Activated CD8-positive, alpha-beta memory T cell treated with anti-CD3 and anti-CD28 coated beads, Interleukin-2, amount 10 ng/mL, durations not matched to agents 7 days and 5 days (primary cell): ENCODE measurements at regions of chr11 and their contacts with region 1.

Region 1: DNA sequence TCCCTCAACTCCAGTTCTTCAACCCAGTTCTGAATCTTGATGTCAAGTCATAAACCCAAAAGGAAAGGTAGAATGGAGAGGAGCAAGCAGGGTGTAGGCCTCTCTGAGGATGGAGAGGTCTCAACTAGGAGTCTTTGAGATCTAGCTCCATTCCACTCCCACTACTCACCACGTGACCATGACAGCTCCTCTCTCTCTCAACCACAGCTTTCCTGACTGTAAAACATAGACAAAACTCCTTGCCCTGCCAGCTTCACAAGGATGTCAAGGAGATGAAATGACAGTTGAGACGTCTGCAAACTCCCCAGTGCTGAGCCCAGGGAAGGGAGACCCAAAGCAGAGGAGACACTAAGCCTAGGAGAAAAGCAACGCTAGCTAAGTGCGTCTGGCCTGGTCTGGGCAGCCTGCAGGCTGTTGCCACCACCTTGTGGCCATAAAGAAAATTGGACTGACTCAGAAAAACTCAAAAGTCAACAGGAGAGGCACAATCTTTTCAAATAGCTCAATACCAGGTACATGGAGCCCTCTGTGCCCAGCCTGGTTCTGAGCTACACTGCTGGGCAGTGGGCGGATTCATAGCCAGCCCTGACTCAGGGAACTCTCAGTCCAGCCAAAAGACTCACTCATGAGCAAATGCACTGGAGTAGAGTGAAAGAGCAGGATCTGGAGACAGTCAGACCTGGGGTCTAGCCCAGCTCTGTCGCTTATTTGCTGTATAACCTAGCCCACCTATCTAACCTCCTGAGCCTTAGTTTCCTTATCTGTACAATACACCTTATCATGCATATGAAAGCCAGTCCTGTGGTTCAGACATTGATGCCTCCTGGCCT is 3.4 kb downstream of the CLPB start:
- DNase-seq: peak; percentile 57
- ATAC-seq: peak; percentile 25
- H3K4me3 Mint-ChIP-seq: no peak overlapping the region
- H3K27ac Mint-ChIP-seq: peak overlapping the region; percentile 42
- H3K4me1 Mint-ChIP-seq: peaks cover 45% of the 10 kb centered on the region
- H3K27me3 Mint-ChIP-seq: no peaks in the 10 kb centered on the region

Region 2: GRCh38 chr11:72040726-72041441 is 390.1 kb before region 1 on chr11:
- CTCF ChIA-PET with region 1: interaction called, 10 read pairs
- DNase-seq: peak; percentile 72
- ATAC-seq: peak; percentile 76
- H3K4me3 Mint-ChIP-seq: no peak overlapping the region
- H3K27ac Mint-ChIP-seq: no peak overlapping the region
- H3K4me1 Mint-ChIP-seq: peaks cover 11% of the 10 kb centered on the region
- H3K27me3 Mint-ChIP-seq: no peaks in the 10 kb centered on the region

Region 3: GRCh38 chr11:72222907-72223614 is 207.9 kb before region 1 on chr11:
- CTCF ChIA-PET with region 1: interaction called, 17 read pairs
- DNase-seq: peak; percentile 96
- ATAC-seq: peak; percentile 78
- H3K4me3 Mint-ChIP-seq: peak overlapping the region; percentile 76
- H3K27ac Mint-ChIP-seq: peak overlapping the region; percentile 76
- H3K4me1 Mint-ChIP-seq: peaks cover 33% of the 10 kb centered on the region
- H3K27me3 Mint-ChIP-seq: peaks cover 5% of the 10 kb centered on the region

Region 4: DNA sequence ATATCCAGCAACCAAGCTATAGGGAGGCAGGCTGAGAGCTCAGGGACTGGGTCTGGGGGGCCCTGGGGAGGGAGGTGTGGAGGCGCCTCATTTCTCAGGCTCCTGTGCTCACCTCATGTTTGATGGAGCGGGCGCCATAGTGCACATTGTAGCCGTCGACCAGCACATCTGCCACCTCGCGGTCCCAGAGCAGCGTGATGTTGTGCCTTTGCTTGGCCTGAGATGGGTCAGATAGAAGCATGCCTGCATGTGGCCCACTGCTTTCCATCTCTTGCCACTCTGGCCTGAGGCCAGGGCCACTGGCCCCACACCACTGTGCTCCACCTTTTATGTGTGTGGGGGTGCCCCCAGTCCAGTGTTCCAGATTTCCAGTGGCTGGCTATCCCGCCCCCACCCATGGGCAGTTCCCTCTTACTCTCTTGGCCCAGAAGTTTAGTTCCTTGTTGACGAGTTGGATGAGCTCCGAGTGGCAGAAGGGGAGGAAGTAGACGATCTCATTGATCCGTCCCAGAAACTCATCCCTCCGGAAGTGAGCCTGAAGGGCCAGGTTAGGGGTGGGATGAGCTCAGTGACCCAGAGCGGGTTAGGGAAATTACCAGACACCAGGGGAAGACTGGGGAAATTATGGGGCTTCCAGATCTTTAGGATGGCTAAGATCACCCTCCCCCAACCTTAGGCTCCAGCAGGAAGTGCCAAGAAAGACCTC is 136.9 kb before region 1 on chr11:
- CTCF ChIA-PET with region 1: interaction called, 38 read pairs
- DNase-seq: peak; percentile 33
- ATAC-seq: no peak
- H3K4me3 Mint-ChIP-seq: no peak overlapping the region
- H3K27ac Mint-ChIP-seq: no peak overlapping the region
- H3K4me1 Mint-ChIP-seq: peaks cover 2% of the 10 kb centered on the region
- H3K27me3 Mint-ChIP-seq: no peaks in the 10 kb centered on the region

Region 5: DNA sequence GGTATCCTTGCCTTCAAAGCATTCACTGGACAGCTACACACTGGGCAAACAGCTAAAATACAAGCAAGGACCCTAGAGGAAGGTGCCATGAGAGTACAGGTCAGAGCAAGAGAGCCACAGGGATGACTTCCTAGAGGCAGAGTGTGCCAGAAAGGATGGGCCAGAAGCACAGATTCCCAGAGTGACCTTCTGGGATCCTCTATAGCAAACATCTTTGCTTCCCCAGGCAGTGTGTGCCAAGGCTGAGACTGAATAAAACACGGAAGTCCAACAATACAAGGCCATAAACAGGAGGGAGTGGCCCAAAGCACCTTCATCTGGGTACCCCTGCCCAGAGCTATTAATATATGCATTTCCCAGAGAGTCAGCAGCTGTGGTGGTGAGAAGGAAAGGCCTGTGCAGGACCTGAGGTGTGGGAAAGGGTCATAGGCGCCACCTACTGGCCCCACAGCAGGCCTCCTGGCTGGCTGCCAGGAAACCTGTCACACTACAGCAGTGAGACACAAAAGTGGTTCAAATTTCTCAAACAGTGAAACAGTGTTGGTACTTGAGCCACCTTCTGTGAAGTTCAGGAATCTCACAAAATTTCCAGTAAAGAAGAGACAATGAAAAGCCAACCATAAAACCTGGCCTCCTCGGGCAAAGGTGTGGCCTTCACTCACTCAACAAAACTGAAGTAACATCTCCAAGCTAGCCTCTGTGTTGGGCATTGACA is 16.9 kb before region 1 on chr11:
- CTCF ChIA-PET with region 1: interaction called, 176 read pairs
- DNase-seq: peak; percentile 86
- ATAC-seq: peak; percentile 93
- H3K4me3 Mint-ChIP-seq: no peak overlapping the region
- H3K27ac Mint-ChIP-seq: peak overlapping the region; percentile 15
- H3K4me1 Mint-ChIP-seq: peaks cover 25% of the 10 kb centered on the region
- H3K27me3 Mint-ChIP-seq: no peaks in the 10 kb centered on the region